HCT116 (cell line): ENCODE measurements at regions of chr17 and their contacts with region 1.

Region 1: GRCh38 chr17:996554-997344 is at the start of gene TIMM22:
- DNase-seq: peak; percentile 96
- ATAC-seq: peak; percentile 95
- H3K4me3 ChIP-seq: peak within 1 kb of the TSS; percentile 99 to 100
- H3K27ac ChIP-seq: peak within 1 kb of the TSS; percentile 58
- H3K4me1 ChIP-seq: peaks cover 8 to 19% of the 10 kb centered on the region in 2 experiments; a peak in 3 of 4 replicates
- H3K27me3 ChIP-seq: no peaks in the 10 kb centered on the region
- CTCF ChIP-seq: peak; percentile 88 to 93 (median 91); a peak in 5 of 6 replicates
- POLR2A ChIP-seq: peak; percentile 80
- RAD21 ChIP-seq: peak; percentile 98
- total RNA-seq, gene TIMM22: 14.0 TPM

Region 2: DNA sequence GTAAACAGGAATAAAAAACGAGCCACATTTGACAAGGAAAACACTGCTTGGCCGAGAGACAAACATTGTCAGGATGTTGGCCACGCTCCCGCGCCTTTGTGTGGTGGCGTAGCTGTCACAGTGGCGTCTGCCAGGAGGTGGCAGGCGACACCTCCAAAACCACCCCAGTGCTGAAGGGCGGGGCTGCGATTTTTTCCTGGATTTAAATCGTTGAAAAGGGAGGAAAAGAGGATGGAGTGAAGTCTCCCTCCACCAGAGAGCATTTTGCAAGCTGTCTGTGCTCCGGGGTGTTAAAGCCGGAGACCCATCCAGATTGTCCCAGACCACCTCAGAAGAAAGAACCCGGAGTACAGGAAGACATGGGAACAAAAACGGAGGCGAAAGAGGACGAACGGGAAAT is 201.9 kb before region 1 on chr17:
- CTCF ChIA-PET with region 1: interaction called, 15 read pairs
- POLR2A ChIA-PET with region 1: no interaction called
- RAD21 ChIA-PET with region 1: no interaction called
- intact Hi-C with region 1: loop called (anchors 1 kb)
- DNase-seq: peak; percentile 47
- ATAC-seq: peak; percentile 70
- H3K4me3 ChIP-seq: no peak overlapping the region
- H3K27ac ChIP-seq: no peak overlapping the region; the same call in 1 of the 2 replicates
- H3K4me1 ChIP-seq: peaks cover 0 to 11% of the 10 kb centered on the region in 2 experiments; a peak in 2 of 4 replicates
- H3K27me3 ChIP-seq: no peaks in the 10 kb centered on the region
- CTCF ChIP-seq: peak; percentile 87 to 95 (median 95)
- POLR2A ChIP-seq: no peak
- RAD21 ChIP-seq: peak; percentile 98